Activated T-helper 1 cell treated with anti-CD3 and anti-CD28 coated beads, Interleukin-12 subunit alpha, Interleukin-12 subunit beta, Interleukin-2, Interleukin-4 antibody, amounts not matched to agents 30 ng/mL and 10 ng/mL and 1 ng/mL, durations not matched to agents 14 hours and 24 hours and 36 hours (primary cell): ENCODE measurements at regions of chr1 and their contacts with region 1.

Region 1: GRCh38 chr1:117512743-117513321 is 93.0 kb upstream of the TENT5C start:
- DNase-seq: no peak
- H3K4me3 Mint-ChIP-seq: no peak overlapping the region
- H3K27ac Mint-ChIP-seq: no peak overlapping the region
- H3K4me1 Mint-ChIP-seq: peaks cover 6% of the 10 kb centered on the region
- H3K27me3 Mint-ChIP-seq: no peaks in the 10 kb centered on the region

Region 2: DNA sequence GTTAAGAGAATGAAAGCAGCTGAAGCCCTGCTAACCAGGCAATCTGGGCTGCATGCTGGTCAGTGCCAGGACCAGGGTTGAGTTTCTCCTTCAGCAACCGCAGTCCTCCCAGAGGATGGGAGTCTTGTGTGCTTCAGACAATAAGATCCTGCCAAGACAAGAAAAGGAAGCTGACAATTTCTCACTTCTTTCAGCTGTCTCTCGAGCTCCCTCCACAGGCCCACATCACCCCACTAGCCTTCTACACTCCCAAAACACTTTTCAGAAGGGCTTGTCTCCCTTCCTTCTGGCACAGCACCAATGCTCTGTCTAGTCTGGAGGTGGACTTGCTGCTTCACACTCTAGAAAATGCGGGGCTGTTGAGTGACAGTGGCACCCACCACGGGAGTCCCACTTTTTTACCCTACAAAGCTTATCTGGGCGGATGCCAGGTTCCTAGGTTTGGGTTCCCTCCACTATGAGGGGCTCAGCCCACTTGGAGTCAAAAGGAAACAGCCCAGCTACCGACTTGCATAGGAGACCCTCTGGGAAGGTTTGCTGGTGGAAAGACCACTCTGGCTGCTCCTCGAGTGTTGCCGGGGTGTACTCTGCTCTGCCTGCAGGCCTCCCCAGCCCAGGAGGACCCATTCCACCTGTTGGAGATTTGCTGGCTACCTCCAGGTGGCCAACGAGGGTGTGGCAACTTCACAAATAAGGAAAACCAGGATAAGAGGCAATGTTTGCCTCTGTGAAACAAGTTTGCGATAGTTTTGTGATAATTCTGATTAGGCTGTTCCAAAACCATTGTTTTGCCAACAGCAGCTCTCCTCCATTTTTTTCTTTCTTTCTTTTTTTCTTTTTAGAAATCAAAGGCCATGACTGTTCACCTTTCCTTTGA is 161.9 kb after region 1 on chr1:
- intact Hi-C with region 1: loop called (anchors 1 kb)
- DNase-seq: peak; percentile 42
- H3K4me3 Mint-ChIP-seq: no peak overlapping the region
- H3K27ac Mint-ChIP-seq: no peak overlapping the region
- H3K4me1 Mint-ChIP-seq: peaks cover 18% of the 10 kb centered on the region
- H3K27me3 Mint-ChIP-seq: peaks cover 18% of the 10 kb centered on the region